ENCODE measurements at regions of chr5 and their contacts with region 1.

Region 1: DNA sequence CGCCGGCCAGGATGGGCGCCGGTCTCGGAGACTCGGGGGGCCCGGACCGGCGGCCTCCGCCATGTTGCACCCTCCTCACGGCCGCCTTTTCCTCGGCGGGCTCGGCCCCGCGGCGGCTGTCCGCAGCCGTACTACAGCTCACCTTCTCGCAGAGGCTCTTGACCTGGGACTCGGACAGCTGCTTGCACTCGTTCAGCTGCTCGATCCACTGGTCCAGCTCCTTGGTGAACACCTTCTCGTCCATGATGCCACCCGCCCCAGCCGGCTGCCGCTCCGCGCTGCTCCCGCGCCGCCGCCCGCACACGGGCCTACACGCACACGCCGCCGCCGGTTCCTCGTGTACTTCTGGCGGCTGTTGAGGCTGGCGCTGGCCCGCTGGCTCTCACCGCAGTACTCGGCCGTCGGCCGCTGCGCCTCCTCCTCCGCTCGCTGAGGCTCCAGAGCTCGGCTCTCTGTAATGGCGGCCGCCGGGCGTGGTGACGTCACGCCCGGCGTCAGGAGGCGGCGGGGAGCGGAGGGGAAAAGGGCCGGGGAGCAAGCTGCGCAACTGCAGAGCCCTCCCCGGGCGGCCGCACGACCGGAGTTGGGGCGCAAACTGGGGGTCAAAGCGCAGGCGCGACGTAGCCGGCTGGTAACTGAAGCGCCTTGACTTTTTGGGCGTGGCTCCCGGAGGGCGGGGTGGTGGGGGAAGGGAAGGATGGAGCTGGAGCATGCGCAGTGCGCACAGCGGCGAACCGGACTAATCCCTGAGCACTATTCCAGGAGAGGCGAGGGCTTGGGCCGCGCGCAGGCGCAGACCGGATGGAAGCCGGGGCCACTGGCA is at the start of gene PPP2CA:
- DNase-seq: peak; percentile 97 to 98
- H3K4me3 ChIP-seq: peak within 1 kb of the TSS; percentile 95 to 100 (median 98)
- H3K27ac ChIP-seq: peak within 1 kb of the TSS; percentile 98 to 100 (median 100)
- H3K4me1 ChIP-seq: peaks cover 34 to 39% of the 10 kb centered on the region in 2 donors
- H3K27me3 ChIP-seq: no peaks in the 10 kb centered on the region
- CTCF ChIP-seq: peak in 2 of 6 experiments; percentile 2 to 3
- POLR2A ChIP-seq: peak; percentile 51 to 92
- total RNA-seq, gene PPP2CA: 78.2 to 220 (median 174) TPM

Region 2: GRCh38 chr5:134140530-134141201 is 85.2 kb before region 1 on chr5:
- intact Hi-C with region 1: no loop called
- DNase-seq: peak; percentile 75 to 77
- H3K4me3 ChIP-seq: no peak overlapping the region
- H3K27ac ChIP-seq: no peak overlapping the region
- H3K4me1 ChIP-seq: no peaks in the 10 kb centered on the region
- H3K27me3 ChIP-seq: no peaks in the 10 kb centered on the region
- CTCF ChIP-seq: peak; percentile 47 to 79 (median 70)
- POLR2A ChIP-seq: no peak

Region 3: DNA sequence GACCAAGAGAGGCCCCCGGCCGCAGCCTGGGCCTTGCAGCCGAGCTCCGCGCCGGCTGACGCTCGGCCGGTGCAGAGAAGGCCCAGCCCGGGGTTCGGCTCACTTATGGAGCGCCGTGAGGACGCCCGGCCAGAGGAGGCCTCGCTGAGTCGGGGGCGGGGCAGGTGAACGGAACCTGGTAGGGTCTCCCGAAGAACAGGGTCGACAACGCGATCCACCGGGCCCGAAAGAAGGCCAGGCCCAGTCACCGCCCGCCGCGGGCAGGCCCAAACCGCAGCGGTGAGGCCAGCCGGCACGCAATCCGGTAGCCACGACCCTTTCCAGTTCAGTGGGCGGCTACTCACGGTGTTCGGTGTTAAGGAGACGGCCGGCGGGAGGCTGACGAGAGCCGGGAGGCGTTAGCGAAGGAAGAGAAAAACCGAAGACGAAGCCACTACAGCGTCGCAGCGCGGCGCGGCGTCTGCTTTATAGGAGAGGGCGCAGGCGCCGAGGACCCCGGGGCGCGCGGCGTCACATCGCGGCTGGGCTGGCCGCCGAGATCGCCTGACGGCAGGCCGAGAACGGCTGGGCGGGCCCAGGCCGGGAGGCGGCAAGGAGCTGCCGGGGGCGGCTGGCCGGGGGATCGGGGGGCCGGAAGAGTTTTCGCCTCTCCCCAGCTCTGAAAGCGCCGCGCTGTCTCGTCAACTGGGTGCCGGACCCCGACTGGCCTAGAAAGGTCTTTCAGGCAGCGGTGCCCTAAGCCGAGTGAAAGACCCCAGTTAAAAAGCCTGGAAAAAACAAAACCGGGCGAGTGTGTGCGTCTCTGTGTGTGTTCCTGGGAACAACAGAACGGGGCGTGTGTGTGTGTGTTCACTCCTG is 49.1 kb before region 1 on chr5 and contains the start of gene SKP1:
- intact Hi-C with region 1: loop called (anchors 5 kb)
- DNase-seq: peak; percentile 78 to 79
- H3K4me3 ChIP-seq: peak within 1 kb of the TSS; percentile 61 to 92 (median 85)
- H3K27ac ChIP-seq: peak within 1 kb of the TSS; percentile 97 to 99 (median 98)
- H3K4me1 ChIP-seq: peaks cover 15 to 29% of the 10 kb centered on the region in 2 donors
- H3K27me3 ChIP-seq: no peaks in the 10 kb centered on the region
- CTCF ChIP-seq: peak in 1 of 6 experiments; percentile 16
- POLR2A ChIP-seq: peak; percentile 95 to 98
- total RNA-seq, gene SKP1: 234 to 418 (median 346) TPM